ENCODE measurements at regions of chr9 and their contacts with region 1.

Region 1: GRCh38 chr9:34419716-34420504 is 38.5 kb downstream of the FAM219A start:
- DNase-seq: peak; percentile 50
- H3K4me3 ChIP-seq: no peak overlapping the region
- H3K27ac ChIP-seq: peak overlapping the region in 1 of 2 experiments; percentile 81; a peak in 2 of 4 replicates
- H3K4me1 ChIP-seq: peaks cover 0 to 32% of the 10 kb centered on the region in 2 experiments; a peak in 1 of 4 replicates
- H3K27me3 ChIP-seq: no peaks in the 10 kb centered on the region
- CTCF ChIP-seq: no peak
- EP300 ChIP-seq: no peak
- RAD21 ChIP-seq: no peak; the same call in 1 of the 2 replicates

Region 2: GRCh38 chr9:34158362-34158869 is 261.5 kb before region 1 on chr9:
- CTCF ChIA-PET with region 1: no interaction called
- POLR2A ChIA-PET with region 1: no interaction called
- DNase-seq: no peak
- H3K4me3 ChIP-seq: no peak overlapping the region
- H3K27ac ChIP-seq: no peak overlapping the region
- H3K4me1 ChIP-seq: no peaks in the 10 kb centered on the region
- H3K27me3 ChIP-seq: no peaks in the 10 kb centered on the region
- CTCF ChIP-seq: no peak
- EP300 ChIP-seq: no peak
- RAD21 ChIP-seq: no peak

Region 3: DNA sequence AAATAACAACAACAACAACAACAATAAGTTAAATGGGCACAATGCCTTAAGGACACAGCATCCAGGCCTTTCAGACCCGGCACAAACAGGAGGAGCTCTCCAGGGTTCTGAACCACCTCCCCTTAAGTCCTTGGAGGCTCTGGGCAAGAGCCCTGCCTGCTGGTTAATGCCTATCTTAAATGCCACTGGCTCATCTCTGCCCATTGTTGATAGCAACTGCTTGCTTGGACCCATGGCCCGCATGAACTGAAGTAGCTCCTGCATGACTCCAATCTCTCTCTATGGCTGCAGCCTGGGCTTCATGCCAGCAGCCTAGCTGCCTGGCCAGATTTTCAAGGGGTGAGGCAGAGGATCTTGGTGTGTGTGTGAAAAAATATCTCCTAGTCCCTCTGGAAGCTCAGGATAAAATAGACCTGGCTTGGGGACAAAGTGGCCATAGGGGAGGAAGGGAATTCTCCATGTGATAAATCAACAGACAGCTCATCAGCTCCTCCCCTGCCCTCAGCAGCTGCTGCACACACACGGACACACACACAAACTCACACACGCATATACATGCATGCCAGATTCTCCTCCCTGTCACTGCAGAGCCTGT is 11.0 kb after region 1 on chr9:
- CTCF ChIA-PET with region 1: interaction called, 13 read pairs
- POLR2A ChIA-PET with region 1: interaction called, 4 read pairs
- DNase-seq: peak; percentile 79
- H3K4me3 ChIP-seq: no peak overlapping the region
- H3K27ac ChIP-seq: peak overlapping the region in 1 of 2 experiments; percentile 78; a peak in 2 of 4 replicates
- H3K4me1 ChIP-seq: peaks cover 4 to 63% of the 10 kb centered on the region in 2 experiments; a peak in 3 of 4 replicates
- H3K27me3 ChIP-seq: no peaks in the 10 kb centered on the region
- CTCF ChIP-seq: no peak
- EP300 ChIP-seq: peak in 1 of 2 experiments; percentile 71; a peak in 1 of 4 replicates
- RAD21 ChIP-seq: peak; percentile 21; the same call in 1 of the 2 replicates

Region 4: GRCh38 chr9:34746526-34746925 is 326.6 kb after region 1 on chr9:
- CTCF ChIA-PET with region 1: no interaction called
- POLR2A ChIA-PET with region 1: no interaction called
- DNase-seq: no peak
- H3K4me3 ChIP-seq: no peak overlapping the region
- H3K27ac ChIP-seq: no peak overlapping the region
- H3K4me1 ChIP-seq: no peaks in the 10 kb centered on the region
- H3K27me3 ChIP-seq: no peaks in the 10 kb centered on the region
- CTCF ChIP-seq: no peak
- EP300 ChIP-seq: no peak
- RAD21 ChIP-seq: no peak

Measured in SK-N-SH (cell line).